ENCODE measurements at regions of chr15 and their contacts with region 1.

Region 1: DNA sequence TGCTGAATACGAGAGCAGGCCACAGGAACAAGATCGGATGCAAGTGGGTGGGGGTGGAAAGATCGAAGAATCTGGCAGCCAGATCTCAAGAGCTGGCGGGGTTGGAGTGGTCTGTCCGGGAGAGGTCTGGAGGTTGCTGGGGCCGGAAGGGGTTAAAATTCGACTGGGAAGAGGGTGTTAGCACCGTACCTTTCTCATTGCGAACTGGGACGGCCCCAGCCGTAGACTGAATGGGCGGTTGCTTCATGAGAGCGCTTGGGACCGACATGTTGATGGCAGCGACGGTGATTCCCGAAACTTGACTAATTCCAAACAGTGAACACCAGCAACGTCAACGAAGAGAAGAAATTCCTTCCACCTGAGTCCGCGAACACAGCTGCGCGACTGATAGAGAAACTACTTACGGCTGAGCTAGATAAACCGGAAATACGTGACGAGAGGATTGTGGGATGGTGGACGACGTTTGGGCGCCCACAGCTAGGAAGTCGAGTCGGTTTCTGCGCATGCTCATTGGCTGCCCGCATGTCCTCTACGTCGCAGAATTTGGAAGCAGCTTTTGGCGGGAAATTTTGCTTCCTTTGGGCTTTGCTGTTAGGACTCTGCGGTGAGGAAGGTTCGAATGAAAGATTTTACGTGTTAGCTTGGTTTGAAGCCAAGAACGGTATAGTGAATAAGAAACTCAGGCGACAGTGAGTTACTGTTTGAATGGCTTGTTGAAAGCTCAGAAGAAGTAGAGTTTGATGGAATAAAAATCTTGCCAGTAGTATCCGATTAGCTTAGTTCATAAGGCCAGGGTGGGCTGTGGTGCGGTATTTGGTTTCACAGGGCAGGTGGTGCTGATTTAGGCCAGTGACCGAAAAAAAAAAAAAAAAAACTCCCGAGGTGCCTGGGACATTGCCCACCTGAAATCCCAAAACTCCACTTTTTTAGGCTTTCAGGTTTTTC is at the start of gene MFAP1:
- DNase-seq: peak; percentile 78 to 99 (median 91)
- ATAC-seq: peak; percentile 94
- H3K4me3 ChIP-seq: peak within 1 kb of the TSS; percentile 88 to 99
- H3K4me3 Mint-ChIP-seq: peak within 1 kb of the TSS; percentile 99
- H3K27ac ChIP-seq: peak within 1 kb of the TSS; percentile 91 to 97
- H3K27ac Mint-ChIP-seq: peak within 1 kb of the TSS; percentile 98
- H3K4me1 ChIP-seq: peaks cover 53% of the 10 kb centered on the region
- H3K4me1 Mint-ChIP-seq: peaks cover 63% of the 10 kb centered on the region
- H3K27me3 ChIP-seq: no peaks in the 10 kb centered on the region
- H3K27me3 Mint-ChIP-seq: no peaks in the 10 kb centered on the region
- CTCF ChIP-seq: no peak
- total RNA-seq, gene MFAP1: 10.1 to 11.9 TPM

Region 2: GRCh38 chr15:42207674-42208579 is 1616.6 kb before region 1 on chr15 and contains the start of gene VPS39:
- CTCF ChIA-PET with region 1: no interaction called
- POLR2A ChIA-PET with region 1: no interaction called
- intact Hi-C with region 1: no loop called
- DNase-seq: peak; percentile 65 to 90 (median 85)
- ATAC-seq: peak; percentile 98
- H3K4me3 ChIP-seq: peak within 1 kb of the TSS; percentile 73 to 96
- H3K4me3 Mint-ChIP-seq: peak within 1 kb of the TSS; percentile 97
- H3K27ac ChIP-seq: peak within 1 kb of the TSS; percentile 83 to 84
- H3K27ac Mint-ChIP-seq: peak within 1 kb of the TSS; percentile 95
- H3K4me1 ChIP-seq: peaks cover 23% of the 10 kb centered on the region
- H3K4me1 Mint-ChIP-seq: peaks cover 40% of the 10 kb centered on the region
- H3K27me3 ChIP-seq: no peaks in the 10 kb centered on the region
- H3K27me3 Mint-ChIP-seq: no peaks in the 10 kb centered on the region
- CTCF ChIP-seq: no peak
- total RNA-seq, gene VPS39: 81.5 to 82.9 TPM

Region 3: GRCh38 chr15:43498988-43499387 is 325.6 kb before region 1 on chr15:
- CTCF ChIA-PET with region 1: no interaction called
- POLR2A ChIA-PET with region 1: no interaction called
- intact Hi-C with region 1: no loop called
- DNase-seq: no peak
- ATAC-seq: no peak
- H3K4me3 ChIP-seq: no peak overlapping the region
- H3K4me3 Mint-ChIP-seq: no peak overlapping the region
- H3K27ac ChIP-seq: no peak overlapping the region
- H3K27ac Mint-ChIP-seq: no peak overlapping the region
- H3K4me1 ChIP-seq: no peaks in the 10 kb centered on the region
- H3K4me1 Mint-ChIP-seq: no peaks in the 10 kb centered on the region
- H3K27me3 ChIP-seq: no peaks in the 10 kb centered on the region
- H3K27me3 Mint-ChIP-seq: no peaks in the 10 kb centered on the region
- CTCF ChIP-seq: no peak

Region 4: GRCh38 chr15:43749690-43750345 is 74.8 kb before region 1 on chr15:
- CTCF ChIA-PET with region 1: no interaction called
- POLR2A ChIA-PET with region 1: interaction called, 6 read pairs
- intact Hi-C with region 1: loop called (anchors 2 kb)
- DNase-seq: peak in 5 of 9 experiments; percentile 21 to 91 (median 59)
- ATAC-seq: peak; percentile 53
- H3K4me3 ChIP-seq: peak overlapping the region; percentile 52 to 53
- H3K4me3 Mint-ChIP-seq: peak overlapping the region; percentile 78
- H3K27ac ChIP-seq: peak overlapping the region; percentile 58 to 81
- H3K27ac Mint-ChIP-seq: peak overlapping the region; percentile 92
- H3K4me1 ChIP-seq: peaks cover 60% of the 10 kb centered on the region
- H3K4me1 Mint-ChIP-seq: peaks cover 62% of the 10 kb centered on the region
- H3K27me3 ChIP-seq: no peaks in the 10 kb centered on the region
- H3K27me3 Mint-ChIP-seq: no peaks in the 10 kb centered on the region
- CTCF ChIP-seq: no peak

Region 5: DNA sequence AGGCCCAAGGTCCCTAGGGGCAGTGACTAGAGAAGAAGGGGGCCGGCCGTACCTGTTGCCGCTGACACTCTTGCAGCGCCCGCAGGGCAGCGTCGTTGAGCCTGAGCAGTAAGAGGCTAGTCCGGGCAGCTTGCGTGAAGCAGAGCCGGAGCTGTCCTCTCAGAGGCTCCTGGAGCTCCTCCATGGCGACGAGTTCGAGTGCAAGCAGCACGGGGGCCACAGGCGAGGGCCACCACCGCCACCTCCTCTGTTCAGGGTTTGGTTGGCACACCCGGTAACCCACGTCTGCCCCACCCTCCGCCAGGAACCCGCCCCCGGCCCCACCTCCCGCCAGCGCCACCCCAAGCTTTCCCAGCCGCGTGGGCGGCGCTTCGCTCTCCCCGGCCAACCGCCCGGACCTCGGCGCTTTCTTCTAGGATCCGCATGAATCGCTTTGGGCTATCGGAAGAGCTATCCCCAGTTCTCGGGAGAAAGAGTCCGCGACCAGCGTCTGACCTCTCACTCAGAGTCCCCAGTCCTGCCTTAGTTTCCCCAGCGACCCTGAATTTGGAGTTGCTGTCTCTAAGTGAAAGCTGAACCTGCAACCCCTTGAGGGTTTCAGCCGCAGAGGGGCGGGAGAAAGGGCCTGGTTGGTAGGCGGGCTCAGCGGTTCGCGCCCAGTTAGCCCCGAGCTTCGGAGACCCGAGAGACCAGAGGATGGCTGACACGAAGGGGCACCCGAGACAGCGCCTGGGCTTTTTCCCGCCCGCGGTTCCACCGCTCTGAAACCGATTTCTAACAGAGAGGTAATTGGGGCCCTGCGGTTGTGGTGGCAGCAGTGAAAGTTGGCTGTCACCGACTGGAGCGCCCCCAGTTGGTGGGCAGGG is 47.6 kb before region 1 on chr15 and contains the start of gene ELL3:
- CTCF ChIA-PET with region 1: interaction called, 5 read pairs
- POLR2A ChIA-PET with region 1: interaction called, 6 read pairs
- intact Hi-C with region 1: loop called (anchors 1 kb)
- DNase-seq: peak; percentile 67 to 93 (median 82)
- ATAC-seq: peak; percentile 80
- H3K4me3 ChIP-seq: peak within 1 kb of the TSS; percentile 82 to 94
- H3K4me3 Mint-ChIP-seq: peak within 1 kb of the TSS; percentile 93
- H3K27ac ChIP-seq: peak within 1 kb of the TSS; percentile 50 to 56
- H3K27ac Mint-ChIP-seq: peak within 1 kb of the TSS; percentile 87
- H3K4me1 ChIP-seq: peaks cover 11% of the 10 kb centered on the region
- H3K4me1 Mint-ChIP-seq: peaks cover 15% of the 10 kb centered on the region
- H3K27me3 ChIP-seq: no peaks in the 10 kb centered on the region
- H3K27me3 Mint-ChIP-seq: no peaks in the 10 kb centered on the region
- CTCF ChIP-seq: peak; percentile 82
- total RNA-seq, gene ELL3: 0.67 to 1.1 TPM

Region 6: GRCh38 chr15:43791993-43792760 is 32.4 kb before region 1 on chr15 and contains the start of gene SERF2:
- CTCF ChIA-PET with region 1: interaction called, 4 read pairs
- POLR2A ChIA-PET with region 1: interaction called, 9 read pairs
- intact Hi-C with region 1: loop called (anchors 1 kb)
- DNase-seq: peak; percentile 99 to 100 (median 99)
- ATAC-seq: peak; percentile 95
- H3K4me3 ChIP-seq: peak within 1 kb of the TSS; percentile 90 to 98
- H3K4me3 Mint-ChIP-seq: peak within 1 kb of the TSS; percentile 96
- H3K27ac ChIP-seq: peak within 1 kb of the TSS; percentile 98
- H3K27ac Mint-ChIP-seq: peak within 1 kb of the TSS; percentile 97
- H3K4me1 ChIP-seq: peaks cover 38% of the 10 kb centered on the region
- H3K4me1 Mint-ChIP-seq: peaks cover 42% of the 10 kb centered on the region
- H3K27me3 ChIP-seq: no peaks in the 10 kb centered on the region
- H3K27me3 Mint-ChIP-seq: no peaks in the 10 kb centered on the region
- CTCF ChIP-seq: no peak
- total RNA-seq, gene SERF2: 322 TPM

Region 7: GRCh38 chr15:43800286-43801141 is 24.1 kb before region 1 on chr15 and contains the start of gene HYPK:
- CTCF ChIA-PET with region 1: interaction called, 7 read pairs
- POLR2A ChIA-PET with region 1: interaction called, 28 read pairs
- intact Hi-C with region 1: loop called (anchors 1 kb)
- DNase-seq: peak; percentile 83 to 95 (median 93)
- ATAC-seq: peak; percentile 99
- H3K4me3 ChIP-seq: peak within 1 kb of the TSS; percentile 63 to 98
- H3K4me3 Mint-ChIP-seq: peak within 1 kb of the TSS; percentile 99
- H3K27ac ChIP-seq: peak within 1 kb of the TSS; percentile 60 to 93
- H3K27ac Mint-ChIP-seq: peak within 1 kb of the TSS; percentile 98
- H3K4me1 ChIP-seq: peaks cover 25% of the 10 kb centered on the region
- H3K4me1 Mint-ChIP-seq: peaks cover 45% of the 10 kb centered on the region
- H3K27me3 ChIP-seq: no peaks in the 10 kb centered on the region
- H3K27me3 Mint-ChIP-seq: no peaks in the 10 kb centered on the region
- CTCF ChIP-seq: no peak
- total RNA-seq, gene HYPK: 10.9 to 14.0 TPM

Region 8: DNA sequence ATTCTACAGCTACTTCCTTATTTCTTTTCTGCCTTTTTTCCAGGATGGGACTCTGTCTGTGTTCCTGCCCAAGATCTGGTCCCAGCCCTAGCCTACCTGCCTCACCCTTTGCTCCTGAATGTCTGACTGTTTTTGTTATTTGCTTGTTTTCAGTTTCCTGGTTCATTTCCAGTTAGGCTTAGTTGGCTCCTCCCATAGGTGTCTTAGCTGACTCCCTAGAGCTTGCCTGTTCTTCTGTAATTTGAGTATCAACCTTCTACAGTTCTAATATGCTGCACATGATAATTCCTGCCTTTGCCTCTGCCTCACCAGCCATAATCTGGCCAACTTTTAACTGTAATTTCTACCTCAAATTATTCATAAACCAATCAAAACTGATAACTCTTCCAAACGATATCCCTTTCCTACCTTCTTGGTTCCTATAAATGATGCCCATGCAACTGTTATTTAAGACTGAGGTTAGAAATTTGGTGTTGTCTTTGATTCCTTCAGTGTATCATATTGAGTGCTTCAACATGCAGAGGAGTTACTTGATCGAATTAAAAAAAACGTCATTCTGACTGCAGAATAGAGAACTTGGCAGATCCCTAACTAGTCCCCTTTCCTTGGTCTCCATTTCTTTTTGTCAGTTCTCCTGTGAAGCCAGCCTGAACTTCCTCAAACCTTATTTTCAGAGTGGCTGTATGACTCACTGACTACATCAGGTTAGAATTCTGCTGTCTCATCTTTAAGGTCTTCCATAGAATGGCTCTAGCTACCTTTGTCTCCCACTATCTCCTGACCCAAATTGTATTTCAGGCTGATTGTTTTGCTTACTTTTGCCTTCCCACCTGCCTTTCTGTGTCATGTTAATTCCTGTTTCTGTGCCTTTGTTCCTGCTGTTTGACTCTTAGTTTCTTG is 472.3 kb after region 1 on chr15:
- CTCF ChIA-PET with region 1: no interaction called
- POLR2A ChIA-PET with region 1: no interaction called
- intact Hi-C with region 1: loop called in 1 of 2 experiments (anchors 10 kb)
- DNase-seq: no peak
- ATAC-seq: no peak
- H3K4me3 ChIP-seq: no peak overlapping the region
- H3K4me3 Mint-ChIP-seq: no peak overlapping the region
- H3K27ac ChIP-seq: no peak overlapping the region
- H3K27ac Mint-ChIP-seq: peak overlapping the region; percentile 30
- H3K4me1 ChIP-seq: peaks cover 7% of the 10 kb centered on the region
- H3K4me1 Mint-ChIP-seq: peaks cover 55% of the 10 kb centered on the region
- H3K27me3 ChIP-seq: no peaks in the 10 kb centered on the region
- H3K27me3 Mint-ChIP-seq: no peaks in the 10 kb centered on the region
- CTCF ChIP-seq: no peak

Region 9: GRCh38 chr15:44426975-44427755 is 602.6 kb after region 1 on chr15 and contains the start of gene CTDSPL2:
- CTCF ChIA-PET with region 1: no interaction called
- POLR2A ChIA-PET with region 1: no interaction called
- intact Hi-C with region 1: loop called in 1 of 2 experiments (anchors 10 kb)
- DNase-seq: peak; percentile 88 to 97 (median 93)
- ATAC-seq: peak; percentile 95
- H3K4me3 ChIP-seq: peak within 1 kb of the TSS; percentile 61 to 83
- H3K4me3 Mint-ChIP-seq: peak within 1 kb of the TSS; percentile 98
- H3K27ac ChIP-seq: peak within 1 kb of the TSS; percentile 86
- H3K27ac Mint-ChIP-seq: peak within 1 kb of the TSS; percentile 98
- H3K4me1 ChIP-seq: peaks cover 25% of the 10 kb centered on the region
- H3K4me1 Mint-ChIP-seq: peaks cover 46% of the 10 kb centered on the region
- H3K27me3 ChIP-seq: no peaks in the 10 kb centered on the region
- H3K27me3 Mint-ChIP-seq: no peaks in the 10 kb centered on the region
- CTCF ChIP-seq: no peak
- total RNA-seq, gene CTDSPL2: 103 to 104 TPM